Gastrocnemius medialis (tissue), 4 donors: ENCODE measurements at regions of chr6 and their contacts with region 1.

Region 1: GRCh38 chr6:26156076-26156849 is 69.0 kb downstream of the HFE start:
- DNase-seq: peak; percentile 81 to 89
- ATAC-seq: peak; percentile 70 to 76
- H3K4me3 ChIP-seq: peak overlapping the region; percentile 71 to 95 (median 77)
- H3K27ac ChIP-seq: peak overlapping the region; percentile 88 to 97 (median 93)
- H3K4me1 ChIP-seq: peaks cover 11 to 23% of the 10 kb centered on the region in 2 donors
- H3K27me3 ChIP-seq: no peaks in the 10 kb centered on the region
- CTCF ChIP-seq: no peak
- POLR2A ChIP-seq: peak; percentile 99

Region 2: GRCh38 chr6:26103770-26104456 is 52.4 kb before region 1 on chr6:
- in situ Hi-C with region 1: no loop called
- intact Hi-C with region 1: loop called (anchors 1 kb)
- DNase-seq: peak; percentile 76 to 87
- ATAC-seq: peak; percentile 98 to 99
- H3K4me3 ChIP-seq: peak overlapping the region; percentile 58 to 68 (median 63)
- H3K27ac ChIP-seq: peak overlapping the region; percentile 77 to 86 (median 84)
- H3K4me1 ChIP-seq: peaks cover 0 to 11% of the 10 kb centered on the region in 2 donors
- H3K27me3 ChIP-seq: no peaks in the 10 kb centered on the region
- CTCF ChIP-seq: peak; percentile 30 to 52 (median 40)
- POLR2A ChIP-seq: peak; percentile 86 to 88

Region 3: GRCh38 chr6:26270903-26271667 is 114.8 kb after region 1 on chr6:
- in situ Hi-C with region 1: no loop called
- intact Hi-C with region 1: loop called (anchors 1 kb)
- DNase-seq: peak in 1 of 2 donors; percentile 45
- ATAC-seq: peak; percentile 55 to 66
- H3K4me3 ChIP-seq: peak overlapping the region; percentile 2 to 54 (median 40)
- H3K27ac ChIP-seq: peak overlapping the region in 3 of 4 donors; percentile 44 to 48 (median 45)
- H3K4me1 ChIP-seq: peaks cover 5 to 6% of the 10 kb centered on the region in 2 donors
- H3K27me3 ChIP-seq: peaks cover 66 to 71% (median 68%) of the 10 kb centered on the region in 3 donors
- CTCF ChIP-seq: no peak
- POLR2A ChIP-seq: no peak

Region 4: GRCh38 chr6:26304797-26305640 is 148.8 kb after region 1 on chr6:
- in situ Hi-C with region 1: no loop called
- intact Hi-C with region 1: no loop called
- DNase-seq: no peak
- ATAC-seq: peak; percentile 57 to 61
- H3K4me3 ChIP-seq: peak overlapping the region; percentile 33 to 50 (median 43)
- H3K27ac ChIP-seq: peak overlapping the region; percentile 19 to 72 (median 48)
- H3K4me1 ChIP-seq: no peaks in the 10 kb centered on the region
- H3K27me3 ChIP-seq: no peaks in the 10 kb centered on the region
- CTCF ChIP-seq: no peak
- POLR2A ChIP-seq: no peak

Region 5: DNA sequence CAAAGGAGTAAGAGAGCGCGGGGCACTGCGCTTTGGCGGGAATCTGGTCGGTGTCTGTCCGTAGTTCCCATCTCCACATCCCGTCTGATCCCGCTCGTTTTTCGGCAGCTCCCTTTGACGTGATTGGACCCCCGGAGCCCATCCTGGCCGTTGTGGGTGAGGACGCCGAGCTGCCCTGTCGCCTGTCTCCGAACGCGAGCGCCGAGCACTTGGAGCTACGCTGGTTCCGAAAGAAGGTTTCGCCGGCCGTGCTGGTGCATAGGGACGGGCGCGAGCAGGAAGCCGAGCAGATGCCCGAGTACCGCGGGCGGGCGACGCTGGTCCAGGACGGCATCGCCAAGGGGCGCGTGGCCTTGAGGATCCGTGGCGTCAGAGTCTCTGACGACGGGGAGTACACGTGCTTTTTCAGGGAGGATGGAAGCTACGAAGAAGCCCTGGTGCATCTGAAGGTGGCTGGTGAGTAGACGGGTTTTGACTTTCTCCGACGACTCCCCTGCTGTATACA is 345.3 kb after region 1 on chr6:
- in situ Hi-C with region 1: no loop called
- intact Hi-C with region 1: no loop called
- DNase-seq: no peak
- ATAC-seq: no peak
- H3K4me3 ChIP-seq: peak overlapping the region in 3 of 4 donors; percentile 27 to 55 (median 37)
- H3K27ac ChIP-seq: no peak overlapping the region
- H3K4me1 ChIP-seq: no peaks in the 10 kb centered on the region
- H3K27me3 ChIP-seq: peaks cover 25 to 30% (median 26%) of the 10 kb centered on the region in 3 donors
- CTCF ChIP-seq: no peak
- POLR2A ChIP-seq: no peak

Region 6: DNA sequence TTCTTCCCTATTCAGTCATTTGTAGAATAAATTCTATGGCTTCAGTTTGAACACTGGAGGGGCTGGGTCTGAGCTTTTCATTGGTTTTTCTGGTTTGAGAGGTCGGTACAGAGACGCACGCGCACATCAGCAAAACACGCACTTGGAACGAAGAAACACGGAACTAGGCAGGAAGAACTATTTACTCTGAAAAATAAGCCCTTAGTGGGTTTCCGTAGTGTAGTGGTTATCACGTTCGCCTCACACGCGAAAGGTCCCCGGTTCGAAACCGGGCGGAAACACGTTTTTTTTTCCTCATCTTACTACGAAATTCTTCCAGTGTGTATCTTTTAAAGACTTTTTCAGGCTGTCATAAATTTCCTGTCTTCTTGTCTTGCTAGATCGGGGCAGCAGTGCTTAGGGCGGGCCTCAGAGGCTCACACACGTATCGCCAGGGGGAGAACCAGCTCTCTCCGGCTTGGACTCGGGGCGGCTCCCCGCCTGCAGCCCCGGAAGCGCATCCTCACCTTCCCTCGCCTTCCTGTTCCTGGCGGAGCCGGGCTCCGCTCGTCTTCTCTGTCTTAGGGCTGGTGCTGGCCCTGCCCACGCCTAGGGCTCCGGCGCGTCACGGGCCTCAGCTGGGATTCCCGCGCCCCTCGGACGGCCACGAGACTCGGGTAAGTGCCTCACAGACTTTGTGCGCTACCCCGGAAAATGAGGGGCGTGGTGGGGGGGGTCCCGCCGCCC is 381.7 kb after region 1 on chr6 and contains the start of gene HMGN4:
- in situ Hi-C with region 1: no loop called
- intact Hi-C with region 1: loop called (anchors 10 kb)
- DNase-seq: peak; percentile 58 to 72
- ATAC-seq: peak; percentile 68 to 85
- H3K4me3 ChIP-seq: peak within 1 kb of the TSS; percentile 75 to 89 (median 89)
- H3K27ac ChIP-seq: peak within 1 kb of the TSS; percentile 89 to 95 (median 92)
- H3K4me1 ChIP-seq: peaks cover 39 to 41% of the 10 kb centered on the region in 2 donors
- H3K27me3 ChIP-seq: no peaks in the 10 kb centered on the region
- CTCF ChIP-seq: no peak
- POLR2A ChIP-seq: peak; percentile 47 to 62
- total RNA-seq, gene HMGN4: 20.1 to 58.7 (median 28.4) TPM

Region 7: DNA sequence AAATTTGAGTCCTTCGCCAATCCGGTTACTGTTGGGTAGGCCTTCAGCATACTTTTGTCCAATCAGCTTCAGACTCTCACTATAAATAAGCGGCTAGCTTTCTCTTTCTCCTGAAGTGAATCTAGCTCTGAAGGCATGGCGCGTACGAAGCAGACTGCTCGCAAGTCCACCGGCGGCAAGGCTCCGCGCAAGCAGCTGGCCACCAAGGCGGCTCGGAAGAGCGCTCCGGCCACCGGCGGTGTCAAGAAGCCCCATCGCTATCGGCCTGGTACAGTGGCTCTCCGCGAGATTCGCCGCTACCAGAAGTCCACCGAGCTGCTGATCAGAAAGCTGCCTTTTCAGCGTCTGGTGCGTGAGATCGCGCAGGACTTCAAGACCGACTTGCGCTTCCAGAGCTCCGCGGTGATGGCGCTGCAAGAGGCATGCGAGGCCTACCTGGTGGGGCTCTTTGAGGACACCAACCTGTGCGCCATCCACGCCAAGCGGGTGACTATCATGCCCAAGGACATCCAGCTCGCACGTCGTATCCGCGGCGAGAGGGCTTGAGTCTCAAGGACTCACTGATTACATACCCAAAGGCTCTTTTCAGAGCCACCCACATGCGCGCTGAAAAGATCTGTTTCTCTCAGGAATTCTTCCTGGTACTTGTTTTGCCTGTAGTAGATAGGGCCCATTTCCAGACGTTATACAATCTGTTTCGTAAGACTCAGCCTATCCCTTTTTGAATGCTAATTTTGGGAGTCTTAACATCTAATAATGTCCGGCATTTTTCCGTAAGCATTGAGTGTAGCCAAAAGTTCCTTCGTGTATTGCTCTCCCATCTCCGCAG is 1653.9 kb after region 1 on chr6:
- in situ Hi-C with region 1: no loop called
- intact Hi-C with region 1: loop called (anchors 5 kb)
- DNase-seq: peak; percentile 26 to 33
- ATAC-seq: peak; percentile 74 to 78
- H3K4me3 ChIP-seq: peak overlapping the region; percentile 51 to 67 (median 60)
- H3K27ac ChIP-seq: peak overlapping the region in 3 of 4 donors; percentile 41 to 68 (median 55)
- H3K4me1 ChIP-seq: peaks cover 3 to 17% of the 10 kb centered on the region in 2 donors
- H3K27me3 ChIP-seq: peaks cover 75 to 96% (median 83%) of the 10 kb centered on the region in 3 donors
- CTCF ChIP-seq: no peak
- POLR2A ChIP-seq: peak; percentile 58 to 76